ENCODE measurements at regions of chr11 and their contacts with region 1.

Region 1: GRCh38 chr11:124673333-124674167 is at the starts of genes SIAE and SPA17:
- DNase-seq: peak; percentile 97
- H3K4me3 Mint-ChIP-seq: peak within 1 kb of the TSS; percentile 91
- H3K27ac Mint-ChIP-seq: peak within 1 kb of the TSS; percentile 92
- H3K4me1 Mint-ChIP-seq: peaks cover 31% of the 10 kb centered on the region
- H3K27me3 Mint-ChIP-seq: no peaks in the 10 kb centered on the region
- total RNA-seq, gene SIAE: 5.3 and 6.4 TPM in 2 replicates
- total RNA-seq, gene SPA17: 1.6 and 2.4 TPM in 2 replicates

Region 2: GRCh38 chr11:124622531-124623451 is 50.8 kb before region 1 on chr11 and contains the start of gene TBRG1:
- intact Hi-C with region 1: loop called (anchors 2 kb)
- DNase-seq: peak; percentile 95
- H3K4me3 Mint-ChIP-seq: peak within 1 kb of the TSS; percentile 98
- H3K27ac Mint-ChIP-seq: peak within 1 kb of the TSS; percentile 96
- H3K4me1 Mint-ChIP-seq: peaks cover 22% of the 10 kb centered on the region
- H3K27me3 Mint-ChIP-seq: peaks cover 15% of the 10 kb centered on the region
- total RNA-seq, gene TBRG1: 31.0 and 31.6 TPM in 2 replicates

Region 3: GRCh38 chr11:124746621-124747243 is 73.2 kb after region 1 on chr11:
- intact Hi-C with region 1: loop called (anchors 1 kb)
- DNase-seq: peak; percentile 92
- H3K4me3 Mint-ChIP-seq: peak overlapping the region; percentile 98
- H3K27ac Mint-ChIP-seq: peak overlapping the region; percentile 95
- H3K4me1 Mint-ChIP-seq: peaks cover 34% of the 10 kb centered on the region
- H3K27me3 Mint-ChIP-seq: peaks cover 22% of the 10 kb centered on the region

Region 4: GRCh38 chr11:124793466-124794278 is 120.1 kb after region 1 on chr11:
- intact Hi-C with region 1: loop called (anchors 2 kb)
- DNase-seq: peak; percentile 78
- H3K4me3 Mint-ChIP-seq: no peak overlapping the region
- H3K27ac Mint-ChIP-seq: no peak overlapping the region
- H3K4me1 Mint-ChIP-seq: peaks cover 29% of the 10 kb centered on the region
- H3K27me3 Mint-ChIP-seq: no peaks in the 10 kb centered on the region

Region 5: DNA sequence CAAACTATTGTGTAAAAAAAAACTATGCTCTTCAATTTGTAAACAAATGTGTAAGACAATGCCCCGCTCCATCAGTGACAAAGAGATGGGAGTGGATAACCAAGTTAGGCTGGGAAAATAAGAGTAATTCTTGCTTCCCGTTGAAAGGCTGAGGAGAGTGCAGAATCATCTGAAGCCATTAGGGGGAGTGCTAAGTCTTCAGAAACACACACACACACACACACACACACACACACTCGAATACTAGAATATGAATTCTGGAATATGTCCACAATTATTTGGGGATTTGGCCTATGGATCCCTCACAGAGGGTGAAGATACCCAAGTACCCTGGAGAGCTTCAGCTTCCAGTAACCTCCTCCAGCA is 163.9 kb after region 1 on chr11:
- intact Hi-C with region 1: loop called (anchors 1 kb)
- DNase-seq: peak; percentile 64
- H3K4me3 Mint-ChIP-seq: no peak overlapping the region
- H3K27ac Mint-ChIP-seq: no peak overlapping the region
- H3K4me1 Mint-ChIP-seq: peaks cover 13% of the 10 kb centered on the region
- H3K27me3 Mint-ChIP-seq: peaks cover 74% of the 10 kb centered on the region

Region 6: GRCh38 chr11:124953753-124954589 is 280.4 kb after region 1 on chr11 and contains the start of gene CCDC15:
- intact Hi-C with region 1: loop called (anchors 2 kb)
- DNase-seq: peak; percentile 99
- H3K4me3 Mint-ChIP-seq: no peak within 1 kb of the TSS
- H3K27ac Mint-ChIP-seq: no peak within 1 kb of the TSS
- H3K4me1 Mint-ChIP-seq: peaks cover 6% of the 10 kb centered on the region
- H3K27me3 Mint-ChIP-seq: no peaks in the 10 kb centered on the region
- total RNA-seq, gene CCDC15: 4.1 and 4.5 TPM in 2 replicates

Measured in activated CD4-positive, alpha-beta T cell treated with anti-CD3 and anti-CD28 coated beads, Interleukin-2, amount 10 ng/mL, durations not matched to agents 24 days and 14 days (primary cell).